ENCODE measurements at regions of chr1 and their contacts with region 1.

Region 1: GRCh38 chr1:121595089-121595488 is 410.3 kb downstream of the SRGAP2C start:
- DNase-seq: no peak
- ATAC-seq: no peak
- H3K4me3 ChIP-seq: no peak overlapping the region
- H3K4me3 Mint-ChIP-seq: no peak overlapping the region
- H3K27ac ChIP-seq: no peak overlapping the region
- H3K27ac Mint-ChIP-seq: peak overlapping the region in 6 of 9 donors; percentile 5 to 72 (median 26)
- H3K4me1 ChIP-seq: peaks cover 0 to 5% of the 10 kb centered on the region in 2 donors
- H3K4me1 Mint-ChIP-seq: peaks cover 0 to 37% (median 21%) of the 10 kb centered on the region in 7 donors
- H3K27me3 ChIP-seq: no peaks in the 10 kb centered on the region
- H3K27me3 Mint-ChIP-seq: no peaks in the 10 kb centered on the region

Region 2: DNA sequence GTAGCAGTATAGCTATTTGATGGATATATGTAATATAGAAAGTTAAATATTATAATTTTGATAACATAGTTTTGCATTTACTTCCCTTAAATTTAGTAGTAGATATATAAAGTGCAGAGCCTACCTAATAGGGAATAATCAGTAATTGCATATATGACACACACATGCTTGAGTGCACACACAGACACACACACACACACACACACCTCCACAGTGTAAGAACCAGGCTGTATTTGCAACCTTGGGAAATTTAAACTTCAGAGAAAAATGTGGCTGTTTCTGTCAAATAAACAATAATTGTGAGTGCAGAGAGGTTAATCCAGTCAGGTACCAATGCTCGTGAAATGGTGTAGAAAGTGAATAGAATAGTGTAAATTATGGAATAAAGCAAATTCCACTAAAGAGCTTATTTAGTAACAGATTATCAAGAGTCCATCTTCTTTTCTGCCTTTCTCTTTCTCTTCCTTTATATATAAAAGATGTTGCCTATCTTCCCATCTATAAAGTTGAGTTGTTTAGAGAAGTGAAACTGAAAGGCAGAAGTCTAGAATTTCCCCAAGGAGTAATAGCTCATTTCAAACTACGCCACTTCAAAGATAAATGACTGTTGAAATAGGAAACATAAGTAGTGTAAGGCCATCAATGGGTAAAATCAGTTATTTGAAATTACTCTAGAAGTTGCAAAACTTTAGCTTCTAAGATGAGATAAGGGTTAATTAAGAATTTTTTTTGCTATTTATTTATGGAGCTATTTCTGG is 136.6 kb before region 1 on chr1:
- CTCF ChIA-PET with region 1: no interaction called
- POLR2A ChIA-PET with region 1: no interaction called
- intact Hi-C with region 1: loop called in 1 of 2 experiments (anchors 5 kb)
- DNase-seq: peak in 5 of 9 donors; percentile 2 to 33 (median 9)
- ATAC-seq: peak; percentile 87
- H3K4me3 ChIP-seq: peak overlapping the region; percentile 55
- H3K4me3 Mint-ChIP-seq: peak overlapping the region; percentile 58 to 89 (median 81)
- H3K27ac ChIP-seq: peak overlapping the region; percentile 35
- H3K27ac Mint-ChIP-seq: peak overlapping the region; percentile 70 to 89 (median 82)
- H3K4me1 ChIP-seq: no peaks in the 10 kb centered on the region
- H3K4me1 Mint-ChIP-seq: peaks cover 0 to 26% (median 11%) of the 10 kb centered on the region in 7 donors
- H3K27me3 ChIP-seq: no peaks in the 10 kb centered on the region
- H3K27me3 Mint-ChIP-seq: peaks cover 0 to 7% (median 0%) of the 10 kb centered on the region in 5 donors

Region 3: DNA sequence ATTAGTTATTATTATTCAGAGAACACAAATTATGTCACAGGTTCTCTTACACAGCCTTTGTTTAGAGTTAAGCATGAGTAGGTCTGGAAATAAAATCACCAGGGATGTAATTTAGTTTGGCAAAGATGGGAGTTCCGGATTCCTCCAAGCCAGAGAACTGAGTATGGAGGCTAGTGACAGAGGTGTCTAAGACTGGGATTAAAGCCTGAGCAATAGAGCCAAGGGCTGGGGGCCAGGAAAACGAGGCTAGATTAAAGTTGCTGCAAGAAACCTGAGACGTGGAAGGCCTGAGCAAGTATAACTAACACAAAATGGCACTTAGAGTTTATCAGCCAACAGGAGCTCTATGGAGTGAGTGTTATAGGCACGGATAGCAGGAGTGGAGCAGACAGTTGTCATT is 28.7 kb before region 1 on chr1:
- CTCF ChIA-PET with region 1: no interaction called
- POLR2A ChIA-PET with region 1: no interaction called
- intact Hi-C with region 1: no loop called
- DNase-seq: no peak
- ATAC-seq: no peak
- H3K4me3 ChIP-seq: no peak overlapping the region
- H3K4me3 Mint-ChIP-seq: no peak overlapping the region
- H3K27ac ChIP-seq: no peak overlapping the region
- H3K27ac Mint-ChIP-seq: peak overlapping the region in 2 of 9 donors; percentile 37 to 67
- H3K4me1 ChIP-seq: no peaks in the 10 kb centered on the region
- H3K4me1 Mint-ChIP-seq: peaks cover 7 to 28% (median 15%) of the 10 kb centered on the region in 7 donors
- H3K27me3 ChIP-seq: no peaks in the 10 kb centered on the region
- H3K27me3 Mint-ChIP-seq: no peaks in the 10 kb centered on the region